ENCODE measurements at regions of chr4 and their contacts with region 1.

Region 1: GRCh38 chr4:111283061-111283677 is 660.3 kb upstream of the PITX2 start:
- DNase-seq: peak; percentile 32
- H3K4me3 ChIP-seq: no peak overlapping the region
- H3K27ac ChIP-seq: no peak overlapping the region
- H3K4me1 ChIP-seq: no peaks in the 10 kb centered on the region
- H3K27me3 ChIP-seq: peaks cover 2% of the 10 kb centered on the region
- CTCF ChIP-seq: peak; percentile 89 to 97

Region 2: GRCh38 chr4:111174331-111174730 is 108.8 kb before region 1 on chr4:
- CTCF ChIA-PET with region 1: no interaction called
- dilution Hi-C with region 1: no loop called
- in situ Hi-C with region 1: no loop called
- intact Hi-C with region 1: loop called (anchors 10 kb)
- DNase-seq: no peak
- H3K4me3 ChIP-seq: no peak overlapping the region
- H3K27ac ChIP-seq: no peak overlapping the region
- H3K4me1 ChIP-seq: no peaks in the 10 kb centered on the region
- H3K27me3 ChIP-seq: no peaks in the 10 kb centered on the region
- CTCF ChIP-seq: no peak

Region 3: DNA sequence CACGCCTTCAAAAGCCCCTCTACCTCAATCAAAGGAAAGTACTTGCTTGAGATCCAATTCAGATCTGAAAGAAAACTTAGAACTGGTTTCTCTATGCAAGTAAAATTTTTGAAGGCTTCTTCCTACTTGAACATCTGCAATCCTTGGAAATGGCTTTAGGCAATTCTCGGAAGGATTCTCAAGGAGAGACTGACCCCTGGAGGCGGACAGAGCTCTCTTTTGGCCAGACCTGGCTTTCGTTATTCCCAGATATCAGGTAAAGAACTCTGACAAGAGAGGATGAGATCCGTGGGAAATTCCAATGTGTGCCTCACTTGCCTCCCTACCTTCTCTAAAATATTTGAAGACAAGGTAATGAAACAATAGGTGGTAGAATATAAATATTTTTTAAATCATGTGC is 191.8 kb after region 1 on chr4:
- CTCF ChIA-PET with region 1: no interaction called
- dilution Hi-C with region 1: no loop called
- in situ Hi-C with region 1: no loop called
- intact Hi-C with region 1: loop called (anchors 1 kb)
- DNase-seq: peak; percentile 6
- H3K4me3 ChIP-seq: no peak overlapping the region
- H3K27ac ChIP-seq: no peak overlapping the region
- H3K4me1 ChIP-seq: no peaks in the 10 kb centered on the region
- H3K27me3 ChIP-seq: no peaks in the 10 kb centered on the region
- CTCF ChIP-seq: peak; percentile 53 to 63

Region 4: GRCh38 chr4:111602848-111603247 is 319.7 kb after region 1 on chr4:
- CTCF ChIA-PET with region 1: no interaction called
- dilution Hi-C with region 1: no loop called
- in situ Hi-C with region 1: no loop called
- intact Hi-C with region 1: loop called (anchors 1 kb)
- DNase-seq: no peak
- H3K4me3 ChIP-seq: no peak overlapping the region
- H3K27ac ChIP-seq: no peak overlapping the region
- H3K4me1 ChIP-seq: no peaks in the 10 kb centered on the region
- H3K27me3 ChIP-seq: no peaks in the 10 kb centered on the region
- CTCF ChIP-seq: peak; percentile 28 to 46

Region 5: DNA sequence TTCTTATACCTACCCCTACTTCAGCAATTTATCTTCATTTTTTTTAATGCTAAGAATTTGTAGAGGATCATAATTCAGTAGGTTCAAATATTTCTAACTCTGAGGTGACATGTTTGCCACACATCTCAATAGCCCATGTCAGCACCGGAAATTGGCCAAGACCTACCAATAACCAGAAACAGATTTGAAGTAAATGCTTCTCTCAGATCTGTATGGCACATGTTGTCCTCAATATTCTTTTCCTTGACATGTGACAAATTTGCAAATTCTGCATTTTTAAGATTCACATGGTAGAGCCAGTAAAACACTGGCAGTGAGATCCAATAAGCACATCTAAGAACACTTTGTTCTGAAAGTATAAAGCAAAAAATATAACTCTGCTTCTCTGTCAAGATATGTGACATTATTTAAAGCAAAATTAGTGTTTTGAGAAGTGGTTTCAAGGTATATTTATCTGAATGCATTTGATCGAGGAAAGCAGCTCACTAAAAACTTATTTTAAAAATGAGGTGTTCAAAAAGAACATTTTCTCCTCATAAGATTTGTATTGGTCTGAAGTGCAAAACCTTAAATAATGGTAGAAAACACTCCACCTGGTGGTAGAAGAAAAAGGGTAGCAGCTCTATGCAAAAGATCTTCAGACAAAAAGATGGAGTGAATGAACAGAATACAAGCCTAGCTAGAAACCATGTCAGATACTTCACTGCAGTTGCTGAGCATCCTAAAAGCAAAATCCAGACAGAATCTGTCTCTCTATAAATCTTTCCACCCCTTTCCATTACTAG is 348.2 kb after region 1 on chr4:
- CTCF ChIA-PET with region 1: no interaction called
- dilution Hi-C with region 1: no loop called
- in situ Hi-C with region 1: no loop called
- intact Hi-C with region 1: loop called (anchors 1 kb)
- DNase-seq: no peak
- H3K4me3 ChIP-seq: no peak overlapping the region
- H3K27ac ChIP-seq: no peak overlapping the region
- H3K4me1 ChIP-seq: peaks cover 4% of the 10 kb centered on the region
- H3K27me3 ChIP-seq: no peaks in the 10 kb centered on the region
- CTCF ChIP-seq: peak; percentile 58 to 62

Measured in mammary epithelial cell (primary cell).